PC-9 (cell line): ENCODE measurements at regions of chr17 and their contacts with region 1.

Region 1: DNA sequence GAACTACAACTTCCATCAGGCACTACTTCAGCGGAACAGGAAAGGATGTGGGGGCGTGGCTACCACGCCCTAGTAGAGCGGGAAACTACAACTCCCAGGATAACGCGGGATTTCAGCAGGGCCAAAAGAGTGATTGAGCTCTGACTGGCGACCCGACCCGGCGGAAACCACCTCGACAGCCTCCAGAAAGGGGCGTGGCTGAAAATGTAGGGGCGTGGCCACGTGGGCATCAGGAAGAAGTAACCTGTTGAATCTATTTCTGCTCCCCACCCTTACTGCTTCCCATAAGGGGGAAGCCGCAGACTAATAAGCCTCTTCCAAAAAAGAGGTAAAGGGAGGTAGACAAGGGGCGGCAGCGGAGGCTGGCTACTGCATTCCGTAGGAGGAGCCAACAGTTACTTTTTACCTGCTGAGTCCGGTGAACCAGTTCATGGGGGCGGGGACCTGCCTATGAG is at the start of gene TMEM102:
- DNase-seq: peak; percentile 92 to 99
- H3K4me3 ChIP-seq: peak within 1 kb of the TSS; percentile 57
- H3K27ac ChIP-seq: peak within 1 kb of the TSS; percentile 68
- H3K4me1 ChIP-seq: 0 out of 2 replicates have a peak, but pooled peaks cover 7% of the 10 kb centered on the region
- H3K27me3 ChIP-seq: no peaks in the 10 kb centered on the region
- CTCF ChIP-seq: no peak
- total RNA-seq, gene TMEM102: 17.0 and 20.7 TPM in 2 replicates

Region 2: GRCh38 chr17:7394452-7395191 is 40.6 kb before region 1 on chr17 and contains the start of gene PLSCR3:
- CTCF ChIA-PET with region 1: interaction called, 3 read pairs
- POLR2A ChIA-PET with region 1: interaction called, 5 read pairs
- intact Hi-C with region 1: loop called (anchors 2 kb)
- DNase-seq: peak; percentile 57 to 95
- H3K4me3 ChIP-seq: peak within 1 kb of the TSS; percentile 78
- H3K27ac ChIP-seq: peak within 1 kb of the TSS; percentile 68
- H3K4me1 ChIP-seq: 0 out of 2 replicates have a peak, but pooled peaks cover 5% of the 10 kb centered on the region
- H3K27me3 ChIP-seq: no peaks in the 10 kb centered on the region
- CTCF ChIP-seq: no peak; the same call in 1 of the 2 replicates
- total RNA-seq, gene PLSCR3: 53.0 and 64.5 TPM in 2 replicates

Region 3: DNA sequence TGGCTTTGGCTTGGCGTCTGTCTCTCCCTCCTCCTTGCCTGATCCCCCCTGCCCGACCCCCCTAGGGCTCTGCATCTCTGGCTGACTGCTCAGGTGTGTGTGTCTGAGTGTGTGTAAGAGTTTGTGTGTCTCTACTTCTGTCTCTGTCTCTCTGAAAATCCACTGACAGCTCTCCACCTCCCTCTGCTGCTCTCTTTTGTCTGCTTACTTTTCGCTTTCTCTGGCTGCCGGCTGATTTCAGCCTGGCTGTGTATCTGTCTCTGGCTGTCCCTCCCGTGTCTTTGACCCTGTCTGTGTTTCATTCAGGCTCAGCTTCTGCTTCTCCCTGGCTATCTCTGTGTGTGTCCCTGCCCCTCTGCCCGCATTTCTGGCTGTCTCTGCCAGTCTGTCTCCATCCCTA is 18.9 kb before region 1 on chr17:
- CTCF ChIA-PET with region 1: no interaction called
- POLR2A ChIA-PET with region 1: no interaction called
- intact Hi-C with region 1: no loop called
- DNase-seq: no peak
- H3K4me3 ChIP-seq: no peak overlapping the region
- H3K27ac ChIP-seq: no peak overlapping the region
- H3K4me1 ChIP-seq: no peaks in the 10 kb centered on the region
- H3K27me3 ChIP-seq: no peaks in the 10 kb centered on the region
- CTCF ChIP-seq: no peak

Region 4: GRCh38 chr17:7502987-7503386 is 67.7 kb after region 1 on chr17:
- CTCF ChIA-PET with region 1: no interaction called
- POLR2A ChIA-PET with region 1: no interaction called
- intact Hi-C with region 1: loop called (anchors 5 kb)
- DNase-seq: no peak
- H3K4me3 ChIP-seq: no peak overlapping the region
- H3K27ac ChIP-seq: no peak overlapping the region
- H3K4me1 ChIP-seq: no peaks in the 10 kb centered on the region
- H3K27me3 ChIP-seq: no peaks in the 10 kb centered on the region
- CTCF ChIP-seq: peak; percentile 31; the same call in 1 of the 2 replicates

Region 5: DNA sequence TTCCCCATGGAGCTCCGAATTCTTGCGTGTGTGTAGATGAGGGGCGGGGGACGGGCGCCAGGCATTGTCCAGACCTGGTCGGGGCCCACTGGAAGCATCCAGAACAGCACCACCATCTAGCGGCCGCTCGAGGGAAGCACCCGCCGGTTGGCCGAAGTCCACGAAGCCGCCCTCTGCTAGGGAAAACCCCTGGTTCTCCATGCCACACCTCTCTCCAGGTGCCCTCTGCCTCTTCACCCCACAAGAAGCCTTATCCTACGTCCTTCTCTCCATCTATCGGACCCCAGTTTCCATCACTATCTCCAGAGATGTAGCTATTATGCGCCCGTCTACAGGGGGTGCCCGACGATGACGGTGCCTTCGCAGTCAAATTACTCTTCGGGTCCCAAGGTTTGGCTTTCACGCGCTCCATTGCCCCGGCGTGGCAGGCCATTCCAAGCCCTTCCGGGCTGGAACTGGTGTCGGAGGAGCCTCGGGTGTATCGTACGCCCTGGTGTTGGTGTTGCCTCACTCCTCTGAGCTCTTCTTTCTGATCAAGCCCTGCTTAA is 125.9 kb after region 1 on chr17:
- CTCF ChIA-PET with region 1: interaction called, 6 read pairs
- POLR2A ChIA-PET with region 1: interaction called, 11 read pairs
- intact Hi-C with region 1: loop called (anchors 1 kb)
- DNase-seq: peak; percentile 62 to 93
- H3K4me3 ChIP-seq: peak overlapping the region; percentile 92
- H3K27ac ChIP-seq: peak overlapping the region; percentile 60
- H3K4me1 ChIP-seq: peaks cover 9% of the 10 kb centered on the region
- H3K27me3 ChIP-seq: no peaks in the 10 kb centered on the region
- CTCF ChIP-seq: peak; percentile 69